MCF 10A (cell line): ENCODE measurements at regions of chr6 and their contacts with region 1.

Region 1: GRCh38 chr6:90098001-90098531 is 198.6 kb downstream of the BACH2 start:
- DNase-seq: peak; percentile 97
- H3K4me3 Mint-ChIP-seq: no peak overlapping the region
- H3K27ac Mint-ChIP-seq: peak overlapping the region; percentile 96
- H3K4me1 Mint-ChIP-seq: peaks cover 43% of the 10 kb centered on the region
- H3K27me3 Mint-ChIP-seq: no peaks in the 10 kb centered on the region
- CTCF ChIP-seq: peak; percentile 40

Region 2: DNA sequence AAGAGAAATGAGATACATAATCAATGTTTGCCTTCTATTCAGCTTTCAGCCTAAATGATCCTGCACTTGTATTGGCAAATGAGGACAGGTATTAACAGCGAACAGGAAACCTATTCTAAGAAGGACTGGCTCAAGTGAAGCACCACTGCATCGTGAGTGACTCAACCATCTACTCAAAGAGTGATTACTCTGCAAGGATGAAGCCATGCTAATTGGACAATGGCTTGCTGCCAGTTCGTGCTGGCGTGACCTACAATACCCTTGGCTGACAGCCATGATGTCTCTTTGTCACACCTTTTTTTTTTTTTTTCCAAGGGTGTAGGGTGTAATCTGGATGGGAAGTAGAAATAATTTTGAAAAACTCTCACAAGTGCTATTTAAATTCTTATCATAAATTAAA is 98.9 kb before region 1 on chr6:
- CTCF ChIA-PET with region 1: interaction called, 16 read pairs
- POLR2A ChIA-PET with region 1: interaction called, 13 read pairs
- intact Hi-C with region 1: no loop called
- DNase-seq: peak; percentile 95
- H3K4me3 Mint-ChIP-seq: no peak overlapping the region
- H3K27ac Mint-ChIP-seq: no peak overlapping the region
- H3K4me1 Mint-ChIP-seq: peaks cover 13% of the 10 kb centered on the region
- H3K27me3 Mint-ChIP-seq: no peaks in the 10 kb centered on the region
- CTCF ChIP-seq: no peak

Region 3: GRCh38 chr6:90296346-90297114 is 198.5 kb after region 1 on chr6 and contains the start of gene BACH2:
- CTCF ChIA-PET with region 1: interaction called, 6 read pairs
- POLR2A ChIA-PET with region 1: interaction called, 6 read pairs
- intact Hi-C with region 1: loop called (anchors 1 kb)
- DNase-seq: peak; percentile 89
- H3K4me3 Mint-ChIP-seq: peak within 1 kb of the TSS; percentile 76
- H3K27ac Mint-ChIP-seq: peak within 1 kb of the TSS; percentile 39
- H3K4me1 Mint-ChIP-seq: peaks cover 9% of the 10 kb centered on the region
- H3K27me3 Mint-ChIP-seq: peaks cover 17% of the 10 kb centered on the region
- CTCF ChIP-seq: no peak
- total RNA-seq, gene BACH2: 7.5 and 9.9 TPM in 2 replicates